ENCODE measurements at regions of chr1 and their contacts with region 1.

Region 1: DNA sequence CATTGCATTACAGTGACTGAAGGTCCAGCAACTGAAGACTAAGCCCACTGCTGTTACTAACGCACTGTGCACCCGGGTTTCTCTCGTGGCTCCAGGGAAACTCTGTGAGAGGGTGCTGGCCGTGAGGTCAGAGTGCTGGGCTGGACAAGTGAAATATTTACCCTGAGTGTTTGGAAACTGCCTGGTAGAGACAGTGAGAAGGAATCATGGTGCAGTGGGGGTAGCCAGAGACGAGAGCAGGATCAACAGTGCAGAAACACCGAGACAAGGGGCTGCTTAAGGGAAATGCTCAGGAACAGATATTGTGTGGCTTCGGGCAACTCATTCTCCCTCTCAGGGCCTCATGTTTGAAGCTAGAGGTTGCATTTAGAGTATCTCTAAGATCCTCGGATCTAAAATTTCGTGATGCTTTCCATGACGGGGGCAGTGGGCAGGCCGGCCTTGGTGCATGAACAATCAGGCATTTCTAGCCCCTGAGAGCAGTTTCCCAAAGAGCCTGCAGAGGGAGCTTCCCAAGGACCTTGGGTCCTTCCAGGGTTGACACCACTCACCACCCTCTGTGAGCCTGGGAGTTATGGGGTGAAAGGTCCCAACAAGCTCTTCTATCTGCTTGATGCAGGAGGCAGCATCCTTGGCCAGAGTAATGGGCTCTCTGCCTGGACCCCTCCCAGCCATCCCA is 9.7 kb downstream of the CD2 start:
- DNase-seq: no peak
- ATAC-seq: peak; percentile 22
- H3K4me3 ChIP-seq: no peak overlapping the region
- H3K27ac ChIP-seq: no peak overlapping the region
- H3K4me1 ChIP-seq: peaks cover 10% of the 10 kb centered on the region
- H3K27me3 ChIP-seq: no peaks in the 10 kb centered on the region; a peak in 1 of 4 replicates
- CTCF ChIP-seq: peak; percentile 25 to 41 (median 36); a peak in 5 of 6 replicates
- EP300 ChIP-seq: no peak
- POLR2A ChIP-seq: no peak
- RAD21 ChIP-seq: peak; percentile 44

Region 2: DNA sequence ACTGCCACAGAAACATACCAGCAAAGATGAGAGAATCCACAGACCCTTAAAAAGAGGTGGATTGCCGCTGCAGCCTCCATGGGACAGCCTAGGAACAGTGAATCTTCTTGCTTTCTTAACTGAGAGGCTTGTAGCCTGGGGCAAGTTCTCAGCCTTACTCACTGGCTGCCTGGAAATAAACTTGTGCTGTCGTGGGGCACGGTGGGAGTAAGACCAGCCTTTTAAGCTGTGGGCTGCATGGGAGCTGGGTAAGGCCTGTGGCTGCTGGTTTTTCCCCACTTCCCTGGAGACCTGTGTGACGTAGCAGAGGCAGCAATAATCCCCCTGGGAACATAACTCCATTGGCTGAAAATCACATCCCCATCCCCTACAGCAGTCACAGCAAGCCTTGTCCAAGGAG is 21.1 kb after region 1 on chr1:
- CTCF ChIA-PET with region 1: interaction called, 6 read pairs
- POLR2A ChIA-PET with region 1: interaction called, 3 read pairs
- RAD21 ChIA-PET with region 1: interaction called, 8 read pairs
- SMC1A ChIA-PET with region 1: interaction called, 24 read pairs
- in situ Hi-C with region 1: no loop called
- intact Hi-C with region 1: no loop called
- DNase-seq: no peak
- ATAC-seq: peak; percentile 70
- H3K4me3 ChIP-seq: no peak overlapping the region
- H3K27ac ChIP-seq: no peak overlapping the region
- H3K4me1 ChIP-seq: no peaks in the 10 kb centered on the region
- H3K27me3 ChIP-seq: no peaks in the 10 kb centered on the region
- CTCF ChIP-seq: no peak
- EP300 ChIP-seq: no peak
- POLR2A ChIP-seq: no peak
- RAD21 ChIP-seq: no peak

Region 3: DNA sequence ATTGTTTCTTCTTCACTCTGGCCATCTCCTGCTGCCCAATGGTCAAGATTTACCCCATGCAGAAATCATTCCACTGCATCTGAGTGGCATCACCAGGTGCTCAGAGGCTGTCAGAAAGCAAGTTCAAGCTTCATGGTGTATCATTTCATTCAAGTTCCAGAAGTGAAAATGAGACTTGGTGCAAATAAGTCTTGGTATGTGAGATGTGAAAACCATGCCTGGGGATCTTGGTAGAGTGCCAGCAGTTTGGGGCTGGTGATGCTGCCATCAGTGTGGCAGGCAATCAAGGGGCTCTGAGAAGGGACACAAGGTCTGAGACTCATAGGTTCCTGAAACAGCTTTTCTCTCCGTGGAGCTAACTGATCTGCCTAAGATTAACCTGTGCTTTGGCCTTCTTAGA is 42.3 kb after region 1 on chr1:
- CTCF ChIA-PET with region 1: interaction called, 14 read pairs
- POLR2A ChIA-PET with region 1: no interaction called
- RAD21 ChIA-PET with region 1: interaction called, 15 read pairs
- SMC1A ChIA-PET with region 1: interaction called, 21 read pairs
- in situ Hi-C with region 1: no loop called
- intact Hi-C with region 1: no loop called
- DNase-seq: peak; percentile 76
- ATAC-seq: peak; percentile 81
- H3K4me3 ChIP-seq: no peak overlapping the region
- H3K27ac ChIP-seq: no peak overlapping the region
- H3K4me1 ChIP-seq: peaks cover 5% of the 10 kb centered on the region
- H3K27me3 ChIP-seq: no peaks in the 10 kb centered on the region
- CTCF ChIP-seq: no peak
- EP300 ChIP-seq: no peak
- POLR2A ChIP-seq: no peak
- RAD21 ChIP-seq: no peak

Measured in GM12878 (cell line).